ENCODE measurements at regions of chr4 and their contacts with region 1.

Region 1: DNA sequence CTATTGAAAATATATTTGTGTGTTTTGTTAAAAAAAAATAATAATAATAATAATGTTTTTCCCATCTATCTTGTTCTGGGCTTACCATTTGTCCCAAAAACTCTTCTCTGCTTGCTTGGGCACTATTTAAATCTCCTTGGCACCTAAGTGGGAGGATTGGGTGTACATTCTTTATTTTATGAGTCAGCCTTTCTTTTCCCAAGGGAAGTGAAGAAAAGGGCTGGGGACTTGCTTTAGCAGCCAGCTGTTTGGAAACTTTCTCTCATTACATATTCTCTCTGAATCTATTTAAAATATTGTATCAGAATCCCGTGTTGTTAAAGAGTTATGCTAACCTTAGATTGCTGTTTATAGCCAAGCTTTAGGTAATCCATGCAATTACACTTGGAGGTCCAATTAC is 2332.4 kb downstream of the ARAP2 start:
- DNase-seq: no peak
- ATAC-seq: no peak
- H3K4me3 Mint-ChIP-seq: no peak overlapping the region
- H3K27ac Mint-ChIP-seq: no peak overlapping the region
- H3K4me1 Mint-ChIP-seq: no peaks in the 10 kb centered on the region
- H3K27me3 Mint-ChIP-seq: no peaks in the 10 kb centered on the region

Region 2: GRCh38 chr4:33975995-33976394 is 64.0 kb after region 1 on chr4:
- CTCF ChIA-PET with region 1: no interaction called
- POLR2A ChIA-PET with region 1: no interaction called
- intact Hi-C with region 1: loop called in 1 of 2 experiments (anchors 10 kb)
- DNase-seq: no peak
- ATAC-seq: no peak
- H3K4me3 Mint-ChIP-seq: no peak overlapping the region
- H3K27ac Mint-ChIP-seq: no peak overlapping the region
- H3K4me1 Mint-ChIP-seq: no peaks in the 10 kb centered on the region
- H3K27me3 Mint-ChIP-seq: no peaks in the 10 kb centered on the region

Measured in activated CD4-positive, alpha-beta T cell treated with anti-CD3 and anti-CD28 coated beads for 36 hours (primary cell).